Activated CD4-positive, alpha-beta T cell treated with anti-CD3 and anti-CD28 coated beads for 36 hours (primary cell): ENCODE measurements at regions of chr6 and their contacts with region 1.

Region 1: GRCh38 chr6:34610819-34611477 is 54.8 kb upstream of the SPDEF start:
- DNase-seq: no peak
- ATAC-seq: no peak
- H3K4me3 Mint-ChIP-seq: no peak overlapping the region
- H3K27ac Mint-ChIP-seq: no peak overlapping the region
- H3K4me1 Mint-ChIP-seq: peaks cover 8% of the 10 kb centered on the region
- H3K27me3 Mint-ChIP-seq: no peaks in the 10 kb centered on the region

Region 2: DNA sequence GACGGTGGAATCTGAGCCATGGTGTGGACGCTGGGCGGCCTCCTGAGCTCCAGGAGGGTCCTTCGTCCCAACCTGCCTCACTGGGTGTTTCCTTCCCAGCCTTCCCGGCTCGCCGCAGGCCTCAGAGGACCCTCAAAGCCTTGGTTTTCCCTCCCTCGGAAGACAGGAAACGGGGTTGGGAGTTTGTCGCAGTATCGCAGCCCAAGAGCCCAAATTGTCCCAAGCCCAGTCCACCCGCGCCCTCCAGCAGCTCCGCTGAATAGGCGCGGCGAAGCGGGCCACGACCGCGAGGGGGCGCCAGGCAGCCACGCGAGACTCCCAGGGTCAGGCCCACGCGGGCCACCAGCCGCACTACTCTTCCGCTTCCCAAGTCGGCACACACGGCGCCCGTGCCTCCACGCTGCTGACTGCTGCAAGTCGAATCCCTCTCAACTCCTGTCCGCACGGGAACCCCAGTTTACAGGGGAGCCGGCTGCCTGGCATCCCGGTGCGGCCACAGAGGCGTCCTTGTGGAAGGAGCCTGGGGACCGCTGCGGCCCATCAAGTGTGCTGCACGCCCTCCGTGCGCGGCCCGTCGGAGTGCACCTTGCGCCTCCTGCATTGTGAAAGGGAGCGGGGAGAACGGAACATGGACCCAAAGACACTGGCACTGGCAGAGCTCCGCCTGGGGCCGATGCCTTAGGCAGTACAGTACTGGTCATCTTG is 414.7 kb before region 1 on chr6:
- CTCF ChIA-PET with region 1: interaction called, 17 read pairs
- POLR2A ChIA-PET with region 1: no interaction called
- intact Hi-C with region 1: loop called (anchors 1 kb)
- DNase-seq: peak; percentile 93
- ATAC-seq: peak; percentile 94
- H3K4me3 Mint-ChIP-seq: peak overlapping the region; percentile 73
- H3K27ac Mint-ChIP-seq: peak overlapping the region; percentile 80
- H3K4me1 Mint-ChIP-seq: peaks cover 11% of the 10 kb centered on the region
- H3K27me3 Mint-ChIP-seq: no peaks in the 10 kb centered on the region

Region 3: DNA sequence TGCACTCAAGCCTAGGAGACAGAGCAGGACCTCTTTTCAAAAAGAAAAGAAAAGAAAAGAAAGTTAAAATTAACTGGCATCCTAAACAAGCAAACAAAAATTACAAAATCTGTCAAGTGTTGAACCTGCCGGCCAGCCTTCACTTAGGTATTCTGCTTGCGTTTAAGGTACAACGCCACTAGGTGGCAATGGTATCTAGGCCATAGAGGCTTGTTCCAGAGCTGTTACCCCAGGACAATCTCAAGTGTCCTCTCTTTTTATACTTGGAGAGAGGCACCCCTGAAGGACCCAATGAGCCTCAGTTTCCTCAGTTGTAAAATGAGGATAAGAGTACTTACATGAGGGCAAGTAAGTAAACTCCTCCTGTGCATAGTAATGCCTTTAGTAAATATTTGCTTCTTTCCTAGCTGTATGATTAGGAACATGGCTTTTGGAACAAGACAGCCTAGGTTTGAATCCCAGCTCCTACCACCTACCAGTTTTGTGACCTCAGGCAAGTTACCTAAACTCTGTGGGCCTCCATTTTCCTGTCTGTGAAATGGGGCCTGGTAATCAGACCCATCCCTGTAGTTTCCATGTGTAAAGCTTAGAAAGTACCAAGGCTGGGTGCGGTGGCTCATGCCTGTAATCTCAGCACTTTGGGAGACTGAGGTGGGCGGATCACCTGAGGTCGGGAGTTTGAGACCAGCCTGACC is 150.9 kb before region 1 on chr6:
- CTCF ChIA-PET with region 1: interaction called, 106 read pairs
- POLR2A ChIA-PET with region 1: interaction called, 7 read pairs
- intact Hi-C with region 1: loop called (anchors 1 kb)
- DNase-seq: peak; percentile 73
- ATAC-seq: peak; percentile 84
- H3K4me3 Mint-ChIP-seq: no peak overlapping the region
- H3K27ac Mint-ChIP-seq: no peak overlapping the region
- H3K4me1 Mint-ChIP-seq: no peaks in the 10 kb centered on the region
- H3K27me3 Mint-ChIP-seq: peaks cover 3% of the 10 kb centered on the region

Region 4: DNA sequence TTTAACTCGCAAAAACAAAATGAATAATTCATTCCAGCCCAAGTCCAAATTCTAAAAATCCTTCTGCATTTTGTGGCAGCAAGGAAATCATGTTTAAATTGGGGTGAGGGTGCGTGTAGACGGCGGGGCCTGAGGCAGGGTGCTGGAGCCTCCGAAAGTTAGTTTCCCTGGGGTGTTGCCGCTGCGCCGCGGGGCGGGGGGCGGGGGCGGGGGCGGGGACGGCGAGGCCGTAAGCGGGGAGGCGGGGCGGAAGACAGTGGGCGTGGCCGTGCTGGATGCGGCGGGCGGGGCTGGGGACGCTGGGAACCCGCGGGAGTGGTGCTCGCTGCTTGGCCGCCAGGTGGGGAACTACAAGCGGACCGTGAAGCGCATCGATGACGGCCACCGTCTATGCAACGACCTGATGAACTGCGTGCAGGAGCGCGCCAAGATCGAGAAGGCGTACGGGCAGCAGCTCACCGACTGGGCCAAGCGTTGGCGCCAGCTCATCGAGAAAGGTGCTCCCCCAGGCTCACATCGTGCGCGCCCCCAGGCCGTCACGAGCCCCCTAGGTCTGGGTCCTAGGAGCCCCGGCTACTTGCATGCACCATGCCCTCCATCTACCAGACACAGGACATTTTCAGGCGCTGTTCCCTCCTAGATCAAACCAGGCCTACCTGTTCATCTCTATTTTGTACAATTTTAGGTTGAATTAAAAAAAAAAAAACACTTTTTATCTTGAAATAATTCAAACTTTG is 83.8 kb before region 1 on chr6:
- CTCF ChIA-PET with region 1: interaction called, 11 read pairs
- POLR2A ChIA-PET with region 1: no interaction called
- intact Hi-C with region 1: loop called (anchors 1 kb)
- DNase-seq: peak; percentile 98
- ATAC-seq: peak; percentile 100
- H3K4me3 Mint-ChIP-seq: no peak overlapping the region
- H3K27ac Mint-ChIP-seq: no peak overlapping the region
- H3K4me1 Mint-ChIP-seq: peaks cover 3% of the 10 kb centered on the region
- H3K27me3 Mint-ChIP-seq: no peaks in the 10 kb centered on the region

Region 5: DNA sequence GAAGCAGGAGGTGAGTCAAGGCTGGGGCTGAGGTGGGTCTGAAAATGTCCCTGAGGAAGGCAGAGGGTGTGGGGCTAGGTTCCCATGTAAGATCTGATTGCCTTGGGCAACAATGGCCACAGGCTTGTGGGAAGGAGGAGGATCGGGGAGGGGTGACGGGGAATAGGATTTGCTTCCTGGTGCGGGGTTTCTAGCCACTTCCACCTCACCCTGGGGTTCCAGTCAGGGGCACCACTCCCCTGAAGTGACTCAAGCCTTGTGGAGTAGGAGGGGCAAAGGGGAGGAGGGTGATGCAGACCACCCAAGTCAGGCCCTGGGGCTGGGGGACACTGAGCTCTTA is 42.6 kb before region 1 on chr6:
- CTCF ChIA-PET with region 1: no interaction called
- POLR2A ChIA-PET with region 1: no interaction called
- intact Hi-C with region 1: no loop called
- DNase-seq: no peak
- ATAC-seq: no peak
- H3K4me3 Mint-ChIP-seq: no peak overlapping the region
- H3K27ac Mint-ChIP-seq: no peak overlapping the region
- H3K4me1 Mint-ChIP-seq: no peaks in the 10 kb centered on the region
- H3K27me3 Mint-ChIP-seq: peaks cover 2% of the 10 kb centered on the region